ENCODE measurements at regions of chr18 and their contacts with region 1.

Region 1: GRCh38 chr18:51171223-51171622 is 26.3 kb downstream of the MEX3C start:
- DNase-seq: no peak
- H3K4me3 Mint-ChIP-seq: peak overlapping the region; percentile 58
- H3K27ac Mint-ChIP-seq: peak overlapping the region; percentile 98
- H3K4me1 Mint-ChIP-seq: peaks cover 62% of the 10 kb centered on the region
- H3K27me3 Mint-ChIP-seq: no peaks in the 10 kb centered on the region

Region 2: DNA sequence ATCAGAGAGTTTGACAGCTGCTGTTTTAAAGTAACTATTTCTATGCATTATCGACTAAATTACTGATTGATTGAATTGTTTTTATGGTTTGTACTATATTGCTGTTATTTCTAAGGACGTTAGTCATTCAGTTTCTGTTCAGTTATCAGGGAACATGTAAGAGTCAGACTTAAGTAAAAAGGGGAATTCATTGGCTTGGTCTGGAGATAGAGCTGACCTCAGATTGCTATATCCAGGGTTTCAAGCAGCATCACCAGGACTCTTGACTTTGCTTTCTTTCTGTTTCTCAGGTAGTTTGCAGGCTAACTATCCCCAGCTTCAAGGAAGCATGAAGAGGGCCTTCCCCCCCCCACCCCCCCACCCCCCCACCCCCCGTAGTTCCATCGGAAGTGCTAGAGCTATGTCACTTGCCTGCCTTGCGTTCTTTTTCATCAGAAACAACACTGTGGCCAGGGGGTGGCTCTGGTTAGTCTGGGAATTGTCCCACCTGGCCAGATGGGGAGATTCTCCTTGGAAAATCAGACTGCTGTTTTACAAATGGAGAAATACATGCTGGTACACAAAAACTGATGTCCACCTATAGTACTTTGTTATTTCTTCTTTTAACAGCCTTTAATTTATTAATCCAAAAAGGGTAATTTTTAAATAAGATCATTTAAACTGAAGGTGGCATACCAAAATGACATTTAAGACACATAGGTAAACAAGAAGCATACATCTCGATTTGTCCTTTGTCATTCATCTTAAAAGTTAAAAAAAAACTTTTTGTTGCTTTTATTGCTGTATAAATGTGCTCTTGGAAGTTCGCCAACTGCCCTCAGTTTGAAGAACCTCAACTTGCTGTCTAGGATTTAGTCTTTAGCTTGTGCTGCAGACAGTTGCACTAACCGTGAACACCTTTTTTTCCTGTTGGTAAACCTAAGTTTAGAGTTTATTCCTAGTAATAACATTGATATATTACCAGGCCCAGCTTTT is 131.8 kb before region 1 on chr18:
- intact Hi-C with region 1: no loop called
- DNase-seq: no peak
- H3K4me3 Mint-ChIP-seq: no peak overlapping the region
- H3K27ac Mint-ChIP-seq: no peak overlapping the region
- H3K4me1 Mint-ChIP-seq: peaks cover 46% of the 10 kb centered on the region
- H3K27me3 Mint-ChIP-seq: no peaks in the 10 kb centered on the region

Region 3: GRCh38 chr18:51110073-51110803 is 61.0 kb before region 1 on chr18:
- intact Hi-C with region 1: loop called (anchors 5 kb)
- DNase-seq: peak; percentile 57
- H3K4me3 Mint-ChIP-seq: no peak overlapping the region
- H3K27ac Mint-ChIP-seq: no peak overlapping the region
- H3K4me1 Mint-ChIP-seq: peaks cover 22% of the 10 kb centered on the region
- H3K27me3 Mint-ChIP-seq: no peaks in the 10 kb centered on the region

Region 4: GRCh38 chr18:51160646-51161045 is 10.6 kb before region 1 on chr18:
- intact Hi-C with region 1: no loop called
- DNase-seq: no peak
- H3K4me3 Mint-ChIP-seq: no peak overlapping the region
- H3K27ac Mint-ChIP-seq: no peak overlapping the region
- H3K4me1 Mint-ChIP-seq: peaks cover 33% of the 10 kb centered on the region
- H3K27me3 Mint-ChIP-seq: no peaks in the 10 kb centered on the region

Region 5: DNA sequence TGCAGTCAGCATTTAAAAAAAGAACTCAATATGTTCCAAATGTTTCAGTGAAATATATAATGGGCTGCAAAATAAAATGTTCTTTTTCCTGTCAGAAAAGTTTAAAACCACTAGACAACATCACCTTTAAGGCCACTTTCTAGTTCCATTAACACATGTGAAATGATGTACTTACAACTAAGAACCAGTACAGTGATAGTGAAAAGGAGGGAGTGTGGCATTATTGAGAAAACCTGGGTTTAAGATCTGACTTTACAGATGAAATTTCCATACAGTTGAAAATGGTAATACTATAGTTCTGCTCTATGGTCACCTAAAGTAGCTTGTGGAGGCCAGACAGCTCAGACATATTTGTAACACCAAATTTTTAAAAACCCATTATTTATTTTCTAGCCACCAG is 11.6 kb after region 1 on chr18:
- intact Hi-C with region 1: loop called (anchors 1 kb)
- DNase-seq: no peak
- H3K4me3 Mint-ChIP-seq: no peak overlapping the region
- H3K27ac Mint-ChIP-seq: peak overlapping the region; percentile 72
- H3K4me1 Mint-ChIP-seq: peaks cover 49% of the 10 kb centered on the region
- H3K27me3 Mint-ChIP-seq: no peaks in the 10 kb centered on the region

Region 6: DNA sequence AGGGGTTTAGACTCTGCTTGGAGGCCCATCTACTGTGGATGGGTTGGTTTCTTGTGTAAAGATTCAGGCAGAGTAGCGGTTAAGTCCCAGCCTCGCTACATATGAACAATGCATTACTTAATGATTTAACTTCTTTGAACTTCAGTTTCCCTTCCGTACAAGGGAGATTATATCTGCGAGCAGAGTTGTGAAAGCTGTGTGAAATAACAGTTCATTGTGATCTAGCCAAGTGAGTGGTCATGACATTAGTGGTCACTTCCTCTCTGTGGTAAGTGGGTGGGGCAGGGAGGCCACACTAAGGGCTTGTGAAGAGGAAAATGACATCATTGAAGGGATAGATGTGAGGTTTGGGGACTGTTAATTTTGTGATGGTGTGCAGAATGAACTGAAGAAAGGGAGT is 40.3 kb after region 1 on chr18:
- intact Hi-C with region 1: loop called (anchors 1 kb)
- DNase-seq: peak; percentile 63
- H3K4me3 Mint-ChIP-seq: peak overlapping the region; percentile 7
- H3K27ac Mint-ChIP-seq: peak overlapping the region; percentile 62
- H3K4me1 Mint-ChIP-seq: peaks cover 14% of the 10 kb centered on the region
- H3K27me3 Mint-ChIP-seq: peaks cover 2% of the 10 kb centered on the region